ENCODE measurements at regions of chr7 and their contacts with region 1.

Region 1: GRCh38 chr7:129367700-129368388 is 66.4 kb upstream of the STRIP2 start:
- DNase-seq: peak; percentile 77
- H3K4me3 ChIP-seq: no peak overlapping the region
- H3K27ac ChIP-seq: no peak overlapping the region
- H3K4me1 ChIP-seq: peaks cover 4% of the 10 kb centered on the region
- H3K27me3 ChIP-seq: no peaks in the 10 kb centered on the region
- CTCF ChIP-seq: peak; percentile 85 to 89
- POLR2A ChIP-seq: no peak

Region 2: DNA sequence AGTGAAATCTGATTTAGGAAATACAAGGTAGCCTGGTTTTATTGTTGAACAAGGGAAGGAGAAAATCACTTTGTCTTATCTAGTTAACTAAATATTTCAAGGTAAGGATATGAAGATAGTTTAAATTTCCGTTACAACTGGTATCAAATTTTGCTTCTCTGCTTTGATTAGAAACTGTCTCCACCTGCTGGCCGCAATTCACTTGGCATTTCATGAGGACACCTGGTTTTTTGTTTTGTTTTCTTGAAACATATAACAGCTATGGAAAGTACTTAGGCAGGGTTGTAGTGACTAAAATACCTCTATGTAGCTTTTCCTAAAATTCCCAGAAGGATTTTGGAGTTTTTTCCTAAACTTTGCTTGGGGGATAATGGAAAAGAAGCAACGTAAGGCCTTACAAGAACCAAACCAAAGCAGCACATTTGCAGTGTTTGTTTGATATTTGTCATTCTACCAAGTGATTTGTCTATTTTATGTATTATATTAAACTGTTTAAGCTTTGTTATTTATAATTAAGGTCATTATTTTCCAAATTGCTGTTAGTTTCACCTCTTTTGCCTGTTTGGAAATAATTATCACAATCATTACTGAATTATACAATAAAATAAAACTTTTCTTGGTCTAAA is 69.5 kb before region 1 on chr7:
- CTCF ChIA-PET with region 1: interaction called, 10 read pairs
- POLR2A ChIA-PET with region 1: no interaction called
- dilution Hi-C with region 1: no loop called
- intact Hi-C with region 1: no loop called
- DNase-seq: peak; percentile 66
- H3K4me3 ChIP-seq: no peak overlapping the region
- H3K27ac ChIP-seq: no peak overlapping the region
- H3K4me1 ChIP-seq: no peaks in the 10 kb centered on the region
- H3K27me3 ChIP-seq: no peaks in the 10 kb centered on the region
- CTCF ChIP-seq: peak; percentile 54 to 56
- POLR2A ChIP-seq: no peak

Region 3: GRCh38 chr7:129351320-129351719 is 16.5 kb before region 1 on chr7:
- CTCF ChIA-PET with region 1: interaction called, 10 read pairs
- POLR2A ChIA-PET with region 1: no interaction called
- dilution Hi-C with region 1: no loop called
- intact Hi-C with region 1: no loop called
- DNase-seq: no peak
- H3K4me3 ChIP-seq: no peak overlapping the region
- H3K27ac ChIP-seq: no peak overlapping the region
- H3K4me1 ChIP-seq: no peaks in the 10 kb centered on the region
- H3K27me3 ChIP-seq: no peaks in the 10 kb centered on the region
- CTCF ChIP-seq: no peak
- POLR2A ChIP-seq: no peak

Region 4: DNA sequence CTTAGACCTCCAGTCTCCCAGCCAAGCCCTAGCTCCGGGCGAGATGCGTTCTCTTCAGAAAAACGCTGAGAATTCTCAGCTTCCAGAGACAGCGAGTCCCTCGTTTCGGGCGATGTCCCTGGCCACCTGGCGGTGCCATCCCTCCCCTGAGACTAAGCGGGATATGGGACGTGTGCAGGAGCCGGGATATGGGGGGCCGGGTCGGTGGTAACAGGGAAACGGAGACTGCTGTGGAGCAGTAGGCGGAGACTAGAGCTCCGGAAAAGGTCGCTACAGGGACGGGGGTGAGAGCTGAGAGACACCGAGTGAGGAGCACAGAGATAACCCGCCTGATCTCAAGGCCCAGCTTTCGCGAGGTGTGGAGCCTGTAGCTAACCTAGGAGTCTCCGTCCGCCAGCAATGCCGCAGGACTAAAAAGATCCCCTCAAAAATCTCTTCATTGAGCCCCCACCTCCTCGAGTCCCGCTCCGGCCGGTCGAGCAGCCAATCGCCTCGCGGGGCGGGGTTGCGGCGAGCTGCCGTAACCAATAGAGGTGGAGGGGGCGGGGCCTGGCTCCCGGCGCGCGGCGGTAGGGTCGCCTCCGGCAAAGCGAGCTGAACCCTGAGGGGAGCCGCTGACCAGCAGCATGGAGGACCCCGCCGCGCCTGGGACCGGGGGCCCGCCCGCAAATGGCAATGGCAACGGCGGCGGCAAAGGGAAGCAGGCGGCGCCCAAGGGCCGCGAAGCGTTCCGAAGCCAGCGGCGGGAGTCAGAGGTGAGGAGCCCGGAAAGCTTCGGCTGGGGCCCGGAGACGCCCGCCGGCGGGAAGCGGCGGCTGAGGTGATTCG is 66.2 kb after region 1 on chr7 and contains the start of gene STRIP2:
- CTCF ChIA-PET with region 1: interaction called, 44 read pairs
- POLR2A ChIA-PET with region 1: no interaction called
- dilution Hi-C with region 1: no loop called
- intact Hi-C with region 1: no loop called
- DNase-seq: peak; percentile 92
- H3K4me3 ChIP-seq: peak within 1 kb of the TSS; percentile 66 to 93 (median 90)
- H3K27ac ChIP-seq: peak within 1 kb of the TSS; percentile 54
- H3K4me1 ChIP-seq: peaks cover 21% of the 10 kb centered on the region
- H3K27me3 ChIP-seq: peaks cover 2 to 5% of the 10 kb centered on the region in 2 experiments
- CTCF ChIP-seq: peak in 1 of 2 donors; percentile 5
- POLR2A ChIP-seq: peak; percentile 86
- total RNA-seq, gene STRIP2: 8.8 and 10.0 TPM in 2 replicates

Region 5: GRCh38 chr7:129468087-129468486 is 100.2 kb after region 1 on chr7:
- CTCF ChIA-PET with region 1: interaction called, 321 read pairs
- POLR2A ChIA-PET with region 1: no interaction called
- dilution Hi-C with region 1: no loop called
- intact Hi-C with region 1: loop called (anchors 1 kb)
- DNase-seq: no peak
- H3K4me3 ChIP-seq: no peak overlapping the region
- H3K27ac ChIP-seq: no peak overlapping the region
- H3K4me1 ChIP-seq: no peaks in the 10 kb centered on the region
- H3K27me3 ChIP-seq: no peaks in the 10 kb centered on the region
- CTCF ChIP-seq: no peak
- POLR2A ChIP-seq: no peak

Region 6: DNA sequence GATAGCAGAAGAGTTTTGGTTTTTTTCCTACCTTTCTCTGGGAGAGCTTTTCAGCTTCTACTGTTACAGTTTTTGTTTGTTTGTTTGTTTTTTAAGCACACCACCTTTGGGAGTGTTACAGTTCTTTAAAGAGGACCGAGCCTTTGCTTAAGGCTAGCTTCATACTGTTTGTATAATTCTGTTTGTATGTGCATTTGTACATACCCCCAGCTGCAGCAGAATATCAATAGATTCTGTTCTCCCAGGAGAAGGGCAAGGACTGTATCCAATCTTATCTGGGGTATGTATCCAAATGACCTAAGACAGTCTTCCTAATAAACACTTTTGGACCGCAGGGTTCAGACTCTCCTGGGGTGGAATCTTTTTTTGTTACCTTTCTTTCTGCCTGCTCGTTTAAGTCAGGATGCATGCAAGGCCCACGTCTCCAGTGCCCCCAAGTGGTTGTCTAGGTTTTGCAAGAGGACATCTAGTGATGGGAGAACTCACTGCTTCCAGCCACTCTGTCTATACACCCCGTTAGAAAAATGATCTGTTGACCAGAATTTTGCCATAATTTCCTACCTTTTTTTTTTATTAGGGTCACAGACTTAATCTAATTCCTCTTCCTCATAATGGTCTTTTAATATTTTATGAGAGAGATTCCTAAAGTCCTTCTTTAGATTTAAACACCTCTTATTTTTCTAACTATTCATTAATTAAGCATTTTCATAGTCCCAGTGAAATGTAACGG is 267.6 kb after region 1 on chr7:
- CTCF ChIA-PET with region 1: interaction called, 10 read pairs
- POLR2A ChIA-PET with region 1: no interaction called
- dilution Hi-C with region 1: no loop called
- intact Hi-C with region 1: no loop called
- DNase-seq: peak; percentile 76
- H3K4me3 ChIP-seq: no peak overlapping the region
- H3K27ac ChIP-seq: no peak overlapping the region
- H3K4me1 ChIP-seq: no peaks in the 10 kb centered on the region
- H3K27me3 ChIP-seq: no peaks in the 10 kb centered on the region
- CTCF ChIP-seq: peak; percentile 68 to 81
- POLR2A ChIP-seq: no peak

Region 7: DNA sequence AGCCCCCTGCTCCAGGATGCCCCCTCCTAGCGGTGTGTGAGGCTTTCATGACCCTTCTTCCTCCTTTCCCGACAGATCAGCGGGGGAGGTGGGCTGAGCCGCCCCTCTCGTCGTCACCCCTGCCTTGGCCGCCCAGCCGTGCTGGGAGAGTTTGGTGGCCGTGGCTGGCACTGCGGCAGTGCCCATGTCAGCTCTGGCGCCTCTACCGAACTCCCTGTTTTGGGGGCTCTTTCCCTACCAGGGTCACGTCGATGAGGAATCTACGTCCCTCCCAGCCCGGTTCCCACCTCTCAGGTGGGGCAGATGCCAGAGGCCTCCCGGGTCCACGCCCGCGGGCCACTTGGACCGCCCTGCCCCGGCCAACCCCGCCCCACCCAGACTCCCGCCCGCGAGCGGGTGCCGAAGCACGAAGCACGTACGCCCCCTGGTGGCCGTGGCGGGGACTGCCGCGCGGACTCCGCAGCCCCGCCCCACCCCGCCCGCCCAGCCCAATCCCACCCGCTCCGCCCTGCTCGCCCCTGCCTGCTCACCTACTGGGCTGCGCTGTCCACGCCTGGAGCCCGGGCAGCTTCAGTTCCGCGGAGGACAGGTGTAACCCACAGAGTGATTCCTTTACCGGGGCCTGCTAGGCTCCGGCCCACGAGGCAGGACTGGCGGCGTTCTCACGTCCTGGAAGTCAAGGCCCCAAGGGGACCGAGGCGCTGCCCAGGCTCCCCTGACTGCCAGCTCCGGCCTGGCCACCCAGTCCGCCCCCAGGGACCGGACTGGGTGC is 457.8 kb after region 1 on chr7:
- CTCF ChIA-PET with region 1: interaction called, 17 read pairs
- POLR2A ChIA-PET with region 1: no interaction called
- dilution Hi-C with region 1: no loop called
- intact Hi-C with region 1: loop called (anchors 5 kb)
- DNase-seq: peak; percentile 73
- H3K4me3 ChIP-seq: peak overlapping the region; percentile 53 to 75 (median 71)
- H3K27ac ChIP-seq: peak overlapping the region; percentile 59
- H3K4me1 ChIP-seq: peaks cover 8% of the 10 kb centered on the region
- H3K27me3 ChIP-seq: no peaks in the 10 kb centered on the region
- CTCF ChIP-seq: peak in 1 of 2 donors; percentile 72
- POLR2A ChIP-seq: no peak